AG04450 (cell line): ENCODE measurements at regions of chr10 and their contacts with region 1.

Region 1: DNA sequence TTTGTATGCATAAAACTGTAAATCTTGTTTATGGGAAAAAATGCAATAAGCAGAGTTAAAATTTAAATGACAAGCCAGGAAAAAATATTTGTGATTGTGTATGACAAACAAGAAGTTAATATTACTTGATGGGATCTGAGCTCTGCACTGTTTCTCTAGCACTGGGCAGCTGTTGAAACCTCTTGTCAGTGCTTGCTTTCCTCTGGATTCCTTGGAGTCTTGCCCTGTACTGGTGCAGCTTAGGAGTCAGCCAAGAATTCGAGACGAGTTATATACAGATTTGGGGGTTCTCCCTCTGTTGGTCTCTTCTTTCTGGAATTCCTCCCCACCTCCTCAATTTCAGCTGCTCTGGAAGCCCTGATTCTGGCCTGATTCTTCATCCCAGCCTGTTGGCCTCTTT is 24.3 kb upstream of the OPN4 start:
- DNase-seq: no peak
- H3K4me3 ChIP-seq: no peak overlapping the region
- H3K27ac ChIP-seq: no peak overlapping the region
- H3K27me3 ChIP-seq: no peaks in the 10 kb centered on the region
- CTCF ChIP-seq: no peak

Region 2: GRCh38 chr10:86661161-86662025 is 31.3 kb after region 1 on chr10:
- CTCF ChIA-PET with region 1: interaction called, 15 read pairs
- POLR2A ChIA-PET with region 1: no interaction called
- DNase-seq: no peak
- H3K4me3 ChIP-seq: no peak overlapping the region
- H3K27ac ChIP-seq: no peak overlapping the region
- H3K27me3 ChIP-seq: peaks cover 3% of the 10 kb centered on the region
- CTCF ChIP-seq: no peak

Region 3: DNA sequence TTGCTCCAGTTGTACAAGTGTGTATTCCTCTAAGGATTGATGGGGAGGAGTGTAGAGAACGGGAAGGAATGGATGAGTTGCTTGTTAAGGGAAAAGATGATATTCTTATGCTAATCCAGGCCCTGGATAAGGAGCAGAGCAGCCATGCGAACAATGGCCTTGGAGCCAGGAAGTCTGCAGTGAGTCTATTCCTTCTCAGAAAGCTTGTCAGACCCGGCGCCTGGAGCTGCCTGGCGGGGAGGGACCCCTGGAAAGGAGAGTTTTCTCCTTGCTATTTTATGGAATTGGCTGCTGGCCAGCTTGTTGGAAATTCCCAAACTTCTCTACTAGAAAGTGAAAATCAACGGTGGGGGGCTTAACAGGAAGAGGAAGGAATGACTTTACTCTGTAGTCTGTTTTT is 238.3 kb after region 1 on chr10:
- CTCF ChIA-PET with region 1: no interaction called
- POLR2A ChIA-PET with region 1: no interaction called
- DNase-seq: no peak
- H3K4me3 ChIP-seq: no peak overlapping the region
- H3K27ac ChIP-seq: peak overlapping the region; percentile 43
- H3K27me3 ChIP-seq: no peaks in the 10 kb centered on the region
- CTCF ChIP-seq: no peak